Spleen (tissue), 13 donors: ENCODE measurements at regions of chr19 and their contacts with region 1.

Region 1: GRCh38 chr19:7680606-7681339 is at the start of gene TRAPPC5:
- DNase-seq: peak; percentile 98
- H3K4me3 ChIP-seq: peak within 1 kb of the TSS; percentile 78 to 100 (median 94)
- H3K27ac ChIP-seq: peak within 1 kb of the TSS; percentile 78 to 98 (median 96)
- H3K4me1 ChIP-seq: peaks cover 6 to 80% (median 42%) of the 10 kb centered on the region in 6 donors
- H3K27me3 ChIP-seq: peaks cover 0 to 42% (median 14%) of the 10 kb centered on the region in 7 donors
- CTCF ChIP-seq: peak; percentile 37 to 100 (median 100)
- POLR2A ChIP-seq: peak in 2 of 3 donors; percentile 47 to 67
- total RNA-seq, gene TRAPPC5: 47.2 to 88.5 (median 77.4) TPM

Region 2: GRCh38 chr19:7565332-7565731 is 115.4 kb before region 1 on chr19:
- intact Hi-C with region 1: loop called (anchors 5 kb)
- DNase-seq: no peak
- H3K4me3 ChIP-seq: no peak overlapping the region
- H3K27ac ChIP-seq: no peak overlapping the region
- H3K4me1 ChIP-seq: peaks cover 0 to 6% (median 5%) of the 10 kb centered on the region in 6 donors
- H3K27me3 ChIP-seq: no peaks in the 10 kb centered on the region
- CTCF ChIP-seq: no peak
- POLR2A ChIP-seq: no peak